CD8-positive, alpha-beta memory T cell (primary cell): ENCODE measurements at regions of chr7 and their contacts with region 1.

Region 1: DNA sequence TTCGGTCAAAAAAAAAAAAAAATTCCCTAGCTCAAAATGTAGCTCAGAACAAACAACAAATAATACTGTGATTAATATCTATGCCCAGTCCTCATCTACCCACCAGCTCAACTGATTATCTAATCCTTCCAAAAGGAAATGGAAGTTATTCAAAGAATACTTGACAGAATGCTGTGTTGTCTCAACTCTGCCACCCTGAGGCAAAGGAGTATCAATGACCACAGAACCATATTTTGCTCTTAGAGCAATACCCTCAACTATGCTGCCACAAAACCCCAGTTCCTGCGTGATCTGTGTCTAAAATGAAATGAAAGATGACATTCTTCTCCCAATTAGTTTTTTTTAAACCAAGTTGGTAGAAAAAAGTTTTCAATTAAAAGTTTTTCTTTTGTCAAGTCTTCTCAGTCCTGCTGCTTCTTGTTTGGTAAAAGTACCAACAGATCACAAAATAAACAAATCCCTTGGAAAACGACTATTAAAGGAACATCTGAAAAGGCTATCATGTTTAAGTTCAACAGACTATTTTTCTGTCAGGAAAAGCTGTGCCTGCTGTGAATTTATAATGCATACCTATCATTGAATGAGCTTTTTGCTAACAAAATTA is 21.6 kb downstream of the RBM28 start:
- DNase-seq: peak in 2 of 5 donors; percentile 28 to 38
- H3K4me3 ChIP-seq: no peak overlapping the region
- H3K4me3 Mint-ChIP-seq: peak overlapping the region; percentile 12 to 86 (median 51)
- H3K27ac ChIP-seq: no peak overlapping the region
- H3K27ac Mint-ChIP-seq: peak overlapping the region; percentile 30 to 90 (median 66)
- H3K4me1 ChIP-seq: peaks cover 42% of the 10 kb centered on the region
- H3K4me1 Mint-ChIP-seq: peaks cover 47 to 52% (median 49%) of the 10 kb centered on the region in 3 donors
- H3K27me3 ChIP-seq: no peaks in the 10 kb centered on the region
- H3K27me3 Mint-ChIP-seq: no peaks in the 10 kb centered on the region

Region 2: DNA sequence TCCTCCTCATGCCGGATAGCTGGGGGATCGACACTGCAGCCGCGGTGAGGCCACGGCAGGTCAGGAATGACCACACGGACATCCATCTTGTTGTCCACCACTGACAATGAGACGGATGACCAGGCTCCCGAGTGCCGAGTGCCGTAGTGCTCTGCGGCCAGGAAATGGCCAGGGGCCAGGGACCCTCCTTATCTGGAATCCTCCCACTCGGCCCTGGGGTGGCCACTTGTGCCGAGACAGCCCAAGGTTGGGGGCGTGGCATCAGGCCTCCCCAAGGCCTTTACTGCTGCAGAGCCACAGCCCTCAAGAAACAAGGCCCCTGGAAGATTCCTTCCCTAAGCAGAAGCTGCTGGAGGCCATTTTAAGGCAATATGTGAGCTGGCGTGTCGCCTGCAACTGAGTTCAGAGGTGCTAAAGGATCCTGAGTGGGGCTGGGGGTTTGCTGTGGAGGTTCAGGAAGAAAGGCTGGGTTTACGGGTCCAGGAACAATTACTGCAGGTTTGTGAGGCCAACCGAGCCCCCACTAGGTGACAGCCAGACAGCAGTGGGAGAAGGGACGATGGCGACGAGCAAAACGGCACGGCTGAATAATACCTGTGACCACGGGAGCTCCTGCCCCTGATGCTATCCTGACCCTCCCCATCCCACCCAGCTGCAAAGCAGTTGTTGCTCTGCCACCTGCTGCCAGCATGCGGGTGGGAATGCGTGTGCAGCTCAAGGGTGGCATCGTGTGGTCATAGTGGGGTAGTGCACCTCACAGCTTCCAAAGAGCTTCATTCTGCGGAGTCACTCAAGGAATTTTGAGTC is 112.7 kb before region 1 on chr7:
- CTCF ChIA-PET with region 1: interaction called, 10 read pairs
- POLR2A ChIA-PET with region 1: no interaction called
- DNase-seq: peak; percentile 43 to 71 (median 53)
- H3K4me3 ChIP-seq: no peak overlapping the region
- H3K4me3 Mint-ChIP-seq: no peak overlapping the region
- H3K27ac ChIP-seq: no peak overlapping the region
- H3K27ac Mint-ChIP-seq: peak overlapping the region in 1 of 8 donors; percentile 31
- H3K4me1 ChIP-seq: no peaks in the 10 kb centered on the region
- H3K4me1 Mint-ChIP-seq: peaks cover 0 to 2% (median 0%) of the 10 kb centered on the region in 3 donors
- H3K27me3 ChIP-seq: peaks cover 4% of the 10 kb centered on the region
- H3K27me3 Mint-ChIP-seq: peaks cover 9 to 24% of the 10 kb centered on the region in 2 donors

Region 3: GRCh38 chr7:128311013-128311412 is 11.1 kb before region 1 on chr7:
- CTCF ChIA-PET with region 1: interaction called, 10 read pairs
- POLR2A ChIA-PET with region 1: no interaction called
- DNase-seq: no peak
- H3K4me3 ChIP-seq: no peak overlapping the region
- H3K4me3 Mint-ChIP-seq: no peak overlapping the region
- H3K27ac ChIP-seq: no peak overlapping the region
- H3K27ac Mint-ChIP-seq: peak overlapping the region in 2 of 8 donors; percentile 21 to 52
- H3K4me1 ChIP-seq: no peaks in the 10 kb centered on the region
- H3K4me1 Mint-ChIP-seq: peaks cover 11 to 18% (median 15%) of the 10 kb centered on the region in 3 donors
- H3K27me3 ChIP-seq: no peaks in the 10 kb centered on the region
- H3K27me3 Mint-ChIP-seq: no peaks in the 10 kb centered on the region

Region 4: GRCh38 chr7:128343554-128344430 is 21.6 kb after region 1 on chr7 and contains the start of gene RBM28:
- CTCF ChIA-PET with region 1: interaction called, 13 read pairs
- POLR2A ChIA-PET with region 1: interaction called, 3 read pairs
- DNase-seq: peak; percentile 71 to 90 (median 86)
- H3K4me3 ChIP-seq: peak within 1 kb of the TSS; percentile 64
- H3K4me3 Mint-ChIP-seq: peak within 1 kb of the TSS; percentile 93 to 99 (median 96)
- H3K27ac ChIP-seq: peak within 1 kb of the TSS; percentile 76
- H3K27ac Mint-ChIP-seq: peak within 1 kb of the TSS; percentile 81 to 97 (median 96)
- H3K4me1 ChIP-seq: peaks cover 26% of the 10 kb centered on the region
- H3K4me1 Mint-ChIP-seq: peaks cover 31 to 43% (median 33%) of the 10 kb centered on the region in 3 donors
- H3K27me3 ChIP-seq: no peaks in the 10 kb centered on the region
- H3K27me3 Mint-ChIP-seq: peaks cover 0 to 8% of the 10 kb centered on the region in 2 donors
- total RNA-seq, gene RBM28: 77.7 to 77.8 TPM